AG04450 (cell line): ENCODE measurements at regions of chr9 and their contacts with region 1.

Region 1: GRCh38 chr9:20873240-20873865 is 158.1 kb downstream of the HACD4 start:
- DNase-seq: no peak
- H3K4me3 ChIP-seq: no peak overlapping the region
- H3K27ac ChIP-seq: no peak overlapping the region
- H3K27me3 ChIP-seq: no peaks in the 10 kb centered on the region
- CTCF ChIP-seq: no peak

Region 2: GRCh38 chr9:20693068-20693467 is 180.3 kb before region 1 on chr9:
- CTCF ChIA-PET with region 1: no interaction called
- POLR2A ChIA-PET with region 1: no interaction called
- DNase-seq: no peak
- H3K4me3 ChIP-seq: no peak overlapping the region
- H3K27ac ChIP-seq: no peak overlapping the region
- H3K27me3 ChIP-seq: no peaks in the 10 kb centered on the region
- CTCF ChIP-seq: no peak

Region 3: DNA sequence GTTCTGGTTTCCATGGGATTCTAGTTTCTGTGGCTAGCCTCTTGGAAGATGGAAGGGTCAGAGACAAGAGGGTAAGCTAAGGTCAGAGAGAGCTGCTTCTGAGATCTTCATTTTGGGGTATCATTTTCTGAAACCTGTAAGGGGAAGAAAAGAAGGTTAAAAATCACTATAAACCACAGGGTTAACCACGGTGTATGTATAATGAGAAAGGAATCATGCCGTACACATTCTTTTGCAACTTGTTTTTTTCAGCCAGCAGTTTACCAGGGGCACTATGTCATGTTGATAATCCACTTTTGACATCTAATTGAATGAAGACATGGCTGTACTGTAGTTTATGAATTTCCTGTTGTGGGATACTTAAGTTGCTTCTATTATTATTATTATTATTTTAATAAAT is 24.9 kb before region 1 on chr9:
- CTCF ChIA-PET with region 1: no interaction called
- POLR2A ChIA-PET with region 1: no interaction called
- DNase-seq: no peak
- H3K4me3 ChIP-seq: no peak overlapping the region
- H3K27ac ChIP-seq: no peak overlapping the region
- H3K27me3 ChIP-seq: no peaks in the 10 kb centered on the region
- CTCF ChIP-seq: no peak

Region 4: DNA sequence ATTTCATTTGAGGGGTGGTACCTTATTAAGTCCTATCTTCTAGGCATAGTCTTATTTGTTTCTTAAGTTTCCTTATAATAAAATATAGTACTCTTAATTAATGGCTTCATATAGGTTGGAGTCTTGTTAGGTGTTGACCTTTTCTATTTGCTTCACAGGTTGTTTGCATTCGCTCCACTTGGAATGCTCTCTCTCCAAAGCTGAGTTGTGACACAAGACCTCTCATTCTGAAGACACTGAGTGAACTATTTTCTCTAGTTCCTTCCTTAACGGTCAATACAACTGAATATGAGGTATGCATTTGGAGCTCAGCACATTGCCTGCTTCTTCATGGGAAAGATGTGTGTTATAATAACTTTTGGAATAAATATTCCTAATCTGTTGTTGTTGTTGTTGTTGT is 10.9 kb before region 1 on chr9:
- CTCF ChIA-PET with region 1: no interaction called
- POLR2A ChIA-PET with region 1: no interaction called
- DNase-seq: no peak
- H3K4me3 ChIP-seq: no peak overlapping the region
- H3K27ac ChIP-seq: no peak overlapping the region
- H3K27me3 ChIP-seq: no peaks in the 10 kb centered on the region
- CTCF ChIP-seq: no peak

Region 5: DNA sequence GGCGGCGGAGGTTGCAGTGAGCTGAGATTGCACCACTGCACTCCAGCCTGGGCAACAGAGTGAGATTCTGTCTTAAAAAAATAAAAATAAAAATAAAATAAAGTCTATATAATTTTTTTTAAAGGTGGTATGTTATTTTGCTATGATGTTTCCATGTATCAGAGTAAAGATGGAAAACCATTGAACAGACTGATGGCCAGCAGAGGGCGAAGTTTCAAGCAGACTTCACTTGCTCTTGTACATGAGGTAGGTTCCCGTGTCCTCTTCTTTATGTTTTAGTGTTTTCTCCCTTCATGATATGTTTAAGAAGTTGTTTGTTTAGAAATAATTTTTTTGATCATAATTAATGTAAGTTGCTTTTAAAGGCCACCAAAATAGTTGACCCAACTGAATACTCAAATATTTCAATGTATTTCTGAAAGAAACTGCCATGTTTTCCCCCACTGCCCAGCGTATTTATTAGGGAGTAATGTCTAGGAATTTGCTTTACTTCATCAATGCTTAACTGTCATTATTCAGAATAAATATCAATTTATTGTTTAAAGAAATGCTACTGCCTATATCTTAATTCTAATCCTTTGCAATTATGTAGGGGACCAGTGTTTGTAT is 11.7 kb after region 1 on chr9:
- CTCF ChIA-PET with region 1: interaction called, 21 read pairs
- POLR2A ChIA-PET with region 1: no interaction called
- DNase-seq: peak; percentile 10
- H3K4me3 ChIP-seq: no peak overlapping the region
- H3K27ac ChIP-seq: no peak overlapping the region
- H3K27me3 ChIP-seq: no peaks in the 10 kb centered on the region
- CTCF ChIP-seq: peak; percentile 64

Region 6: GRCh38 chr9:20981486-20981885 is 108.1 kb after region 1 on chr9:
- CTCF ChIA-PET with region 1: no interaction called
- POLR2A ChIA-PET with region 1: no interaction called
- DNase-seq: peak; percentile 88
- H3K4me3 ChIP-seq: peak overlapping the region; percentile 0
- H3K27ac ChIP-seq: peak overlapping the region; percentile 89
- H3K27me3 ChIP-seq: no peaks in the 10 kb centered on the region
- CTCF ChIP-seq: no peak